ENCODE measurements at regions of chr14 and their contacts with region 1.

Region 1: GRCh38 chr14:29687866-29688265 is 239.8 kb downstream of the PRKD1 start:
- DNase-seq: no peak
- H3K4me3 ChIP-seq: no peak overlapping the region
- H3K27ac ChIP-seq: no peak overlapping the region
- H3K4me1 ChIP-seq: no peaks in the 10 kb centered on the region
- H3K27me3 ChIP-seq: no peaks in the 10 kb centered on the region
- CTCF ChIP-seq: no peak
- POLR2A ChIP-seq: no peak

Region 2: GRCh38 chr14:29759521-29760340 is 71.9 kb after region 1 on chr14:
- intact Hi-C with region 1: loop called (anchors 2 kb)
- DNase-seq: no peak
- H3K4me3 ChIP-seq: no peak overlapping the region
- H3K27ac ChIP-seq: no peak overlapping the region
- H3K4me1 ChIP-seq: no peaks in the 10 kb centered on the region
- H3K27me3 ChIP-seq: no peaks in the 10 kb centered on the region
- CTCF ChIP-seq: no peak
- POLR2A ChIP-seq: no peak

Measured in breast epithelium (tissue), 4 donors.